Activated naive CD4-positive, alpha-beta T cell treated with anti-CD3 and anti-CD28 coated beads for 36 hours (primary cell): ENCODE measurements at regions of chr12 and their contacts with region 1.

Region 1: GRCh38 chr12:62435303-62436163 is 31.1 kb upstream of the MON2 start:
- DNase-seq: peak; percentile 68
- H3K4me3 Mint-ChIP-seq: peak overlapping the region; percentile 76
- H3K27ac Mint-ChIP-seq: no peak overlapping the region
- H3K4me1 Mint-ChIP-seq: peaks cover 11% of the 10 kb centered on the region
- H3K27me3 Mint-ChIP-seq: peaks cover 30% of the 10 kb centered on the region

Region 2: DNA sequence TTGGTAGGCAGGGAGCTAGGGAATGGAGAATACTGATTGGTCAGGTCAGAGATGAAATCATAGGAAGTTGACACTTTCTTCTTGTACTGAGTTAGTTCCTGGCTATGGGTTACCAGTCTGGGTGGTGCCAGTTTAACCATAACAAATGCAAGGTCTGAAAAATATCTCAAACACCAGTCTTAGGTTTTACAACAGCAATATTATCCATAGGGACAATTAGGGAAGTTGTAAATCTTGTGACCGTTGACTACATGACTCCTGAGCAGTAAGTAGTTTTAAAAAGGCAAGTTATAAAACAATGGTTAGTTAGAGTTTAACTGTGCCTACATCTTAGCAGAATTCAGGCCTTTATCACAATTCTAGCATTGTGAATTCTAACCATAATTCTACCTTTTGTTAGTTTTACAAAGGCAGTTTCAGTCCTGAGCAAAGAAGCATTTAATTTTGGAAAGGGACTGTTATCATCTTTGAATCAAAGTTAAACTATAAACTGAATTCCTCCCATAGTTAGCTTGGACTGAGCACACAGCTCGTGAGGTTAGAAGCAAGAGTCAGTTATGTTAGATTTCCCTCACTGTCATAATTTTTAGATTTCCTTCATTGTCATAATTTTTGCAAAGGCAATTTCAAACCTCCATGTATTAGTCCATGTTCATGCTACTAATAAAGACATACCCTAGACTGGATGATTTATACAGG is 11.4 kb after region 1 on chr12:
- CTCF ChIA-PET with region 1: interaction called, 11 read pairs
- intact Hi-C with region 1: no loop called
- DNase-seq: no peak
- H3K4me3 Mint-ChIP-seq: no peak overlapping the region
- H3K27ac Mint-ChIP-seq: no peak overlapping the region
- H3K4me1 Mint-ChIP-seq: no peaks in the 10 kb centered on the region
- H3K27me3 Mint-ChIP-seq: peaks cover 3% of the 10 kb centered on the region

Region 3: GRCh38 chr12:62522984-62523383 is 87.5 kb after region 1 on chr12:
- CTCF ChIA-PET with region 1: interaction called, 8 read pairs
- intact Hi-C with region 1: loop called (anchors 1 kb)
- DNase-seq: no peak
- H3K4me3 Mint-ChIP-seq: no peak overlapping the region
- H3K27ac Mint-ChIP-seq: no peak overlapping the region
- H3K4me1 Mint-ChIP-seq: peaks cover 36% of the 10 kb centered on the region
- H3K27me3 Mint-ChIP-seq: no peaks in the 10 kb centered on the region

Region 4: GRCh38 chr12:62603061-62603810 is 167.7 kb after region 1 on chr12:
- CTCF ChIA-PET with region 1: interaction called, 4 read pairs
- intact Hi-C with region 1: loop called (anchors 1 kb)
- DNase-seq: peak; percentile 79
- H3K4me3 Mint-ChIP-seq: peak overlapping the region; percentile 86
- H3K27ac Mint-ChIP-seq: peak overlapping the region; percentile 99
- H3K4me1 Mint-ChIP-seq: peaks cover 35% of the 10 kb centered on the region
- H3K27me3 Mint-ChIP-seq: no peaks in the 10 kb centered on the region

Region 5: GRCh38 chr12:62793256-62794217 is 358.0 kb after region 1 on chr12:
- CTCF ChIA-PET with region 1: interaction called, 137 read pairs
- intact Hi-C with region 1: loop called (anchors 1 kb)
- DNase-seq: peak; percentile 83
- H3K4me3 Mint-ChIP-seq: no peak overlapping the region
- H3K27ac Mint-ChIP-seq: no peak overlapping the region
- H3K4me1 Mint-ChIP-seq: no peaks in the 10 kb centered on the region
- H3K27me3 Mint-ChIP-seq: no peaks in the 10 kb centered on the region

Region 6: DNA sequence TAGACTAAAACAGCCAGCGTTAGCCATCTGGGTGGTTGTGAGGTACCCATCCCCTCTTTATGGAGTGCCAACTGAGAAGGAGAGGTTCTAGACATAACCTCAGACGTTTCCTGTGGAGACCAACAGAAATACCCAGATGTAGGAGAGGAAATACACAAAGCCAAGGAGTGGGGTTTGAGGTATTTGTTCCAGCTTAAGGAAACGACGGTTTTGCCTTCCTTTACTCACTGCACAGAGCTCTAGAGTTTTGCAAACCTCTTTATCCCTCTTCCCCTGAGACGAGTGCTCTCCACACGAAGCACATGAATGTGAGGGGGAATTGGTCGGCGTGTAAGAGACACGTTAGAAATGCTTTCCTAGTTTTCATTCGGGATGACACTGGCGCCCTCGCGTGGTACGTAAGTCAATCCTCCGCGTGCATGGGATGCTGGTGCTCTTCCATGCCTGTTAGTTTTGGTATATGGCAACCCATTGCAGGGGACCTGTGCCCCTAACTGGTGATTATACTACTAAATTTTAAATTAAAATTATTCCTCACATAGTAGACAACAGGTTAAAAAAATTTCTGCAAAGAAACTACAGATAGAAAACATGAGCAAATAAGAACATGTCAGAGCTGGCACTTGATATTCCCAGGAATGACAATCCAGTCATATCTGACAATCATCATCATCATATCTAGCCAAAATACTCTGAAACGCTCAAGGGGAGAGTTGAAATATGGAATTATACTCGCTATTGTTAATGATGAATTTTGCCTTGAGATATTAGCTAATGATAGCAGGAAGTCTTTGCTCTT is 377.7 kb after region 1 on chr12:
- CTCF ChIA-PET with region 1: interaction called, 34 read pairs
- intact Hi-C with region 1: loop called (anchors 1 kb)
- DNase-seq: peak; percentile 60
- H3K4me3 Mint-ChIP-seq: peak overlapping the region; percentile 52
- H3K27ac Mint-ChIP-seq: no peak overlapping the region
- H3K4me1 Mint-ChIP-seq: peaks cover 8% of the 10 kb centered on the region
- H3K27me3 Mint-ChIP-seq: peaks cover 16% of the 10 kb centered on the region